OCI-LY7 (cell line): ENCODE measurements at regions of chr20 and their contacts with region 1.

Region 1: DNA sequence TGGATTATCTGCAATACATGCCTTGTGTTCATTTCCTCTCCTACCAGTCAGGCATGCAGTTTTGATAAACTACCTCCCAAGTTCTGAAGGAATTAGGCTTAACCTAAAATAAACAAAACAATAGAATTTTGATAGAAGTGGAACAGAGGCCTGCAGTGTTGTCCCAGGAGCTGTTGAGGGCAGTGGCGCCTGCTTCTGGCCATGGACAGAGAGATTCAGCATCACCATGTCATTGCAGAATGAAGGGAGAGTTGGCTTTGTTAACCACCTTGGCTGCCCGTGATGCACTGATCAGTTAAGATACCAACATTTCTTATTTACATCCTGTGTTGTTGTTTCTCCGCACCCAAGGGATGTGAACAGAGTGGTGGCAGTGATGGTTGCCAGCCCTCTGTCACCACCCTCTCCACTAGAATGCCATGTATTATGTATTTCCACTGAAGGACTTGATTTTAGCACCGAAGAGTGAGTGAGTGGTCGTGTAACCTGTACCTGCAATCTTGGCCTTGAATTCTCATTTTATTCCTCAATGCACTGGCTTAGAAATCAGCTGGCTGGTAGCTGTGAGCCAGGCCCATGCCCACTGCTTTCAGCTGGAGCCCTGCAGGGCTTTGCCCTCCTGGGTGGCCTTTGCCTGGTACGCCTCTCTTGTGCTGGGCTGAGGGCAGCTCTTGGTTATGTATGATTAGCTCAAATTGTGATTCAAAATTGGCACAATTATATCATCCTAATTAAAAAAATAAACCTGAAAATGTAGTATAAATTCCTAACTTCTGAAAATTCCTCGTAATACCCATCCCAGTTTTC is 56.5 kb downstream of the SHLD1 start:
- DNase-seq: no peak
- H3K4me3 ChIP-seq: no peak overlapping the region
- H3K27ac ChIP-seq: peak overlapping the region; percentile 94
- H3K4me1 ChIP-seq: peaks cover 85% of the 10 kb centered on the region
- CTCF ChIP-seq: peak; percentile 62

Region 2: DNA sequence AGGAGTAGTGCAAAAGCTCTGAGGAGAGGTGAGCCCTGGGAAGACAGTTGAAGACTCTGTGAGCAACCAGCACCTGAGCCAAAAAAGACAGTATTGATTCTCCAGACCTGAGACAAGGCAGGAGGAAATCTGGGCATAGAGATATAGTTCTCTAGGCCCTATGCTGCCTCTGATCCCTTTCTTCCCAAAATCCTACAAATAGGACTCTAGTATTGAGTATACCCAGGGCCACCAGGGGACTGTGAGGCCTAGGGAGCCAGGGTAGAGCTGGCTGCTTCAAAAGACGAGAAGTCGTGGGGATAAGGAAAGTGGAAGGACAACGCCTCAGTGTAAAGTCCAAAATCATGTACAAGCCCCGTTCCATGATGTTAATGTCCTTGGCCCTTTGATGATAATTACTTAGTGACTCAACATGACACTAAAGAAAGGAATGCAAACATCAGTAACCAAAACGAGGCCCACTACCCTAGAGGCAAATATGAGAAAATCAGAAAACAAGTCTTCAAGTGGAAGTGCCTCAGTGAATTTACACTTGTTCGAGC is 292.6 kb before region 1 on chr20:
- CTCF ChIA-PET with region 1: no interaction called
- POLR2A ChIA-PET with region 1: no interaction called
- intact Hi-C with region 1: no loop called
- DNase-seq: no peak
- H3K4me3 ChIP-seq: no peak overlapping the region
- H3K27ac ChIP-seq: no peak overlapping the region
- H3K4me1 ChIP-seq: no peaks in the 10 kb centered on the region
- CTCF ChIP-seq: no peak

Region 3: DNA sequence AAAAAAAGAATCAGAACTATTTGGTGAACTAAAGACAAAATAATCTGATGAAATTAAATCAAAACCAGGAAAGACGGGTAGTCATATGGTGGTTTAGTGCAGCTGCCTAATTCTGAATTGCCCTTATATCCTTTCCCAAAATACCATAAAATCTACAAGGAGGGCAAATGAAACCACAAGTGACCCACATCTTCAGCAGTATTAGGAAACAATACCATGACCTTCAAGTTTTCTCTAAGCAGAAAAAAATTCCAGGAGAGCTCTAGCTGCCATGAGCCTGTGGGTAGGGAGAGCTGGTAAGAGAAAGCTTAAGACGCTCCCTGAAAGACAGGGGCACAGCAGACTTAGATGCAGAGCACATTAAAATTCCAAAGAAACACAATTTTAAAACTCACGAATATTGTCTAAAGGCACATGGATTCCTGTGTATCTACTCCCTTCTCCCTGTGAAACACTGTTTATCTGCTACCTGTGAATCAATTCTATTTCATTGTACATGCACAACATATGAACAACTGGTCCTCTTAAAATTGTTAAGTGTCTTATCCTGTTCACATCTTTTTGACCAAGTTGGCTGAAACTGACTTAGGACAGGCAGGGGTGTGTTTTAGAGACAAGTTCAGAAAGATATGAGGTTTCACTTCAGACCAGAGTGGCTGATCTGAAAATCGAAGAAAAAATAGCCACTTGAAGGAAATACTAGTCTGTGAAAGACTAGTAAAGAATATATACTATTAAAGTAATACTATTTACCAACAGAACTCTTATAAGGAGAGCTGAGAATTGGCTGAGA is 210.1 kb before region 1 on chr20:
- CTCF ChIA-PET with region 1: no interaction called
- POLR2A ChIA-PET with region 1: interaction called, 11 read pairs
- intact Hi-C with region 1: no loop called
- DNase-seq: no peak
- H3K4me3 ChIP-seq: peak overlapping the region; percentile 3
- H3K27ac ChIP-seq: peak overlapping the region; percentile 97
- H3K4me1 ChIP-seq: peaks cover 100% of the 10 kb centered on the region
- CTCF ChIP-seq: no peak

Region 4: GRCh38 chr20:5822569-5822968 is 15.9 kb after region 1 on chr20:
- CTCF ChIA-PET with region 1: no interaction called
- POLR2A ChIA-PET with region 1: interaction called, 18 read pairs
- intact Hi-C with region 1: no loop called
- DNase-seq: peak; percentile 53
- H3K4me3 ChIP-seq: no peak overlapping the region
- H3K27ac ChIP-seq: peak overlapping the region; percentile 57
- H3K4me1 ChIP-seq: peaks cover 29% of the 10 kb centered on the region
- CTCF ChIP-seq: no peak